Activated CD4-positive, alpha-beta T cell treated with anti-CD3 and anti-CD28 coated beads for 36 hours (primary cell): ENCODE measurements at regions of chr4 and their contacts with region 1.

Region 1: GRCh38 chr4:5758741-5759140 is 47.7 kb downstream of the EVC start:
- DNase-seq: peak; percentile 84
- ATAC-seq: peak; percentile 98
- H3K4me3 Mint-ChIP-seq: no peak overlapping the region
- H3K27ac Mint-ChIP-seq: no peak overlapping the region
- H3K4me1 Mint-ChIP-seq: peaks cover 13% of the 10 kb centered on the region
- H3K27me3 Mint-ChIP-seq: peaks cover 4% of the 10 kb centered on the region

Region 2: GRCh38 chr4:5365071-5366008 is 393.4 kb before region 1 on chr4:
- CTCF ChIA-PET with region 1: no interaction called
- POLR2A ChIA-PET with region 1: no interaction called
- intact Hi-C with region 1: no loop called
- DNase-seq: no peak
- ATAC-seq: no peak
- H3K4me3 Mint-ChIP-seq: no peak overlapping the region
- H3K27ac Mint-ChIP-seq: no peak overlapping the region
- H3K4me1 Mint-ChIP-seq: no peaks in the 10 kb centered on the region
- H3K27me3 Mint-ChIP-seq: no peaks in the 10 kb centered on the region

Region 3: DNA sequence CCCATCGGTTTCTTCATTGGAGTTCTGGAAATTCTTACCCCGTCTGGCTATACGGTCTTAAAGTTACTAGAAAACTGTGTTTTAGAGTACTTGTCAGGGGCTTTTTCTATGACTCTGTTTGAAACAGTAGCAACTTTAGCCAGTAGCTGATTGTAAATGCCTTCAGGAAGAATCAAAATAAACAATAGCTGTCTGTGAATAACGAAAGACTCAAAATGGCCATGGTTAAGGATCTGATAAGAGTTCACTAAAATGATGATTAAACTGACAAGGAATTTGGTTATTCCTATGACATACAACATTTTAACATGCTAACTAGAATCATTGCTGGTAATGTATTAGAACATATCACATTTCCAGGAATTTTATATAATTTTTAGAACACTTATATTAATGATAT is 241.4 kb before region 1 on chr4:
- CTCF ChIA-PET with region 1: no interaction called
- POLR2A ChIA-PET with region 1: no interaction called
- intact Hi-C with region 1: no loop called
- DNase-seq: no peak
- ATAC-seq: no peak
- H3K4me3 Mint-ChIP-seq: no peak overlapping the region
- H3K27ac Mint-ChIP-seq: no peak overlapping the region
- H3K4me1 Mint-ChIP-seq: no peaks in the 10 kb centered on the region
- H3K27me3 Mint-ChIP-seq: peaks cover 1% of the 10 kb centered on the region

Region 4: GRCh38 chr4:5711479-5712184 is 47.1 kb before region 1 on chr4:
- CTCF ChIA-PET with region 1: no interaction called
- POLR2A ChIA-PET with region 1: no interaction called
- intact Hi-C with region 1: loop called in 1 of 2 experiments (anchors 1 kb)
- DNase-seq: no peak
- ATAC-seq: no peak
- H3K4me3 Mint-ChIP-seq: peak overlapping the region; percentile 60
- H3K27ac Mint-ChIP-seq: no peak overlapping the region
- H3K4me1 Mint-ChIP-seq: peaks cover 21% of the 10 kb centered on the region
- H3K27me3 Mint-ChIP-seq: peaks cover 44% of the 10 kb centered on the region

Region 5: GRCh38 chr4:5863461-5864113 is 104.8 kb after region 1 on chr4:
- CTCF ChIA-PET with region 1: no interaction called
- POLR2A ChIA-PET with region 1: no interaction called
- intact Hi-C with region 1: loop called in 1 of 2 experiments (anchors 2 kb)
- DNase-seq: peak; percentile 87
- ATAC-seq: peak; percentile 95
- H3K4me3 Mint-ChIP-seq: no peak overlapping the region
- H3K27ac Mint-ChIP-seq: no peak overlapping the region
- H3K4me1 Mint-ChIP-seq: peaks cover 24% of the 10 kb centered on the region
- H3K27me3 Mint-ChIP-seq: peaks cover 6% of the 10 kb centered on the region